ENCODE measurements at regions of chr12 and their contacts with region 1.

Region 1: GRCh38 chr12:22443379-22444316 is 100.7 kb downstream of the C2CD5 start:
- DNase-seq: peak; percentile 60 to 70
- H3K4me3 ChIP-seq: no peak overlapping the region
- H3K27ac ChIP-seq: no peak overlapping the region
- H3K4me1 ChIP-seq: no peaks in the 10 kb centered on the region
- H3K27me3 ChIP-seq: no peaks in the 10 kb centered on the region
- CTCF ChIP-seq: peak in 5 of 6 experiments; percentile 37 to 89 (median 78)
- POLR2A ChIP-seq: no peak

Region 2: DNA sequence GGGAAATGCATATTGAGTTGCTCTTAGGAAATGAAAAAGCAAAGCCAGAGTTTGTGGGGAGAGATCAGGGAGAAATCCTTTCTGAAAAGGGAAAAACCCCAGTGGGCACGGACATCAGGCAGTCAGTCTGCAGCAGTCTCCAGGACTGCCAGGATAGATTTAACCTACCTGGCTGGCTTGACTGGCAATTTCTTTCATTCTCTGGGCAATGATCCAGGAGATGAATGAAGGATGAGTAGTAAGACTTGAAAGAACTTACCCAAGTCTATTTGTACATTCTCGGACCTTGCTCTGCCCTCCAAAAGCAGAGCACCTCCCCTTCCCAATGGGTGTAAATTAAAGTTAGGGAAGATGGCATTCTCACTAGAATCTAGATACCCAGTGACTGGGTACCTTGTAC is 354.8 kb before region 1 on chr12:
- intact Hi-C with region 1: loop called (anchors 5 kb)
- DNase-seq: no peak
- H3K4me3 ChIP-seq: no peak overlapping the region
- H3K27ac ChIP-seq: no peak overlapping the region
- H3K4me1 ChIP-seq: no peaks in the 10 kb centered on the region
- H3K27me3 ChIP-seq: no peaks in the 10 kb centered on the region
- CTCF ChIP-seq: no peak
- POLR2A ChIP-seq: no peak

Region 3: DNA sequence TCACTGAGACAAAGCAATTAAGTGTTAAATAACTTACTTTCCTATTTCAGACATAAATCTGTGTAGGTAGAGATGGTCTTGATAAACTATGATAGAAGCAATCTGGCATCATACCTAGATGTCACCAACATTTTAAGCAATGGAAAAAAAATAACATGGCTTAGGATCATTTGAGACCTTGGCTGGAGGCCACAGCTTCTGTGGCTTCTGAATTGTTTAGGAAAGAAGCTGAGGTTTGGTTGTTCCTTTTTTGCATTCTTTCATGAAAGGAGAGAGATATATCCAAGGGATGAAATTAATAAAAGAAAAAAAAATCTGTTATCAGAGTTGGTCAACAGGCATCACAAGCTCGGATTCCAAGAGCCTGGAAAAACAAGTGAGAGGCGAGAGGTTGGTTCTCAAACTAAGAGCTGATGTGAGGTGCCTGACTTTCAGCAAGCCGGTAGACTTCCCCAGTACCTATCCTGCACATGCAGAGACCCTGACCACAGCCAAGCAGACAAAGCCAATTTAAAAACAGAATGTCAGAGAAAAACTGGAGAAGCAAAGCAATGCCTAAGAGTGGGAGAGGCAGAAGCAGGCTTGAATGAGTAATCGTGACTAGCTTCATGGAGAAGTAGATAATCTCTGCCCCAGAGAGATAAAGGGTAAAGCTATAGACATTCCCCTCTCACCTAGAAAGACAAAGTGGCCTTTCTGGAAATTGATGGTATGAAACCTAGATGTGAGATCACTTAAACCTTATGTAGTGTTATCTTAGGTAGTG is 65.7 kb before region 1 on chr12:
- intact Hi-C with region 1: no loop called
- DNase-seq: peak; percentile 23 to 35
- H3K4me3 ChIP-seq: no peak overlapping the region
- H3K27ac ChIP-seq: no peak overlapping the region
- H3K4me1 ChIP-seq: peaks cover 8% of the 10 kb centered on the region in 2 donors
- H3K27me3 ChIP-seq: no peaks in the 10 kb centered on the region
- CTCF ChIP-seq: no peak
- POLR2A ChIP-seq: no peak